Posterior vena cava (tissue), 2 donors: ENCODE measurements at regions of chr1 and their contacts with region 1.

Region 1: GRCh38 chr1:203871107-203871875 is 9.9 kb downstream of the SNRPE start:
- DNase-seq: no peak

Region 2: GRCh38 chr1:204072931-204073836 is 201.9 kb after region 1 on chr1 and contains the start of gene SOX13:
- intact Hi-C with region 1: loop called (anchors 5 kb)
- DNase-seq: peak; percentile 96
- total RNA-seq, gene SOX13: 43.6 to 47.0 TPM